GM12878 (cell line): ENCODE measurements at regions of chr9 and their contacts with region 1.

Region 1: DNA sequence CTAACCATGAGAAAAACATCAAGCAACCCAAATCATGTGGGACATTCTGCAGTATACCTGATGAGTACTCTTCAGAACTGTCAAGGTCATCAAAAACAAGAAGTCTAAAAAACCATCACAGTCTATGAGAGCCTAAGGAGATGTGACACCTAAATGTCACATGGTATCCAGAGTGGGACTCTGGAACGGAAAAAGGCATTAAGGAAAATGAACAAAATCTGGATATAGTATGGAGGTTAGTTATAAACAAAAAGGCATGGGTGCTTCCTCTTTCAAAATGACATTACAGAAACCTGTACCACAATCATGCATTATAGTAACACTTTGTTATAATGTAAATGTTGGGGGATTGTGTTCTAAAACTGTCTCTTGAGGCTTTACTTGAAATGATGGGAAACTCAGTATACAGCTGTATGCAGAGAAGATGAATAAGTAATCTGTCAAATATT is 47.4 kb downstream of the PRKACG start:
- DNase-seq: peak; percentile 46
- ATAC-seq: peak; percentile 86
- H3K4me3 ChIP-seq: no peak overlapping the region
- H3K27ac ChIP-seq: no peak overlapping the region
- H3K4me1 ChIP-seq: peaks cover 16% of the 10 kb centered on the region
- H3K27me3 ChIP-seq: no peaks in the 10 kb centered on the region
- CTCF ChIP-seq: no peak
- EP300 ChIP-seq: peak; percentile 74 to 77; a peak in 3 of 4 replicates
- POLR2A ChIP-seq: no peak
- RAD21 ChIP-seq: no peak

Region 2: DNA sequence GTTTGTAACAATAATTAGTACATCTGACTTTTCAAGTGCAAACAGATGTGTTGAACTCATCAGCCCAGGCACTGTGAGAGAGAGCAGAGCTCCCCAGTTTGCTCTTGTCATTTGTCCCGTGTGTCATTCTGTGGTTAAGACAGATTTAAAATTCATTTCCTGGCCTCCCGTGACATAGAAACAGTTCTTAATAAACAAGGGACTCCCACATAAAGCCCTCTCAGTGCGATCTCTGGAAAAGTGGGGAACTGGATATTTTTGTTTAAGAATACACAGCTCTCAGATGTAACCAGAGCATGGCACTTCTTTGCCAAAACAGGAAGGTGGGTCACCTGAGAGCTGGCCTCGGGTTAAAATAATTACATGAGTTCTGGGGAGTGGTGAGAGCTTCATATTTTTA is 11.2 kb before region 1 on chr9:
- CTCF ChIA-PET with region 1: interaction called, 56 read pairs
- POLR2A ChIA-PET with region 1: interaction called, 6 read pairs
- RAD21 ChIA-PET with region 1: interaction called, 41 read pairs
- SMC1A ChIA-PET with region 1: interaction called, 64 read pairs
- in situ Hi-C with region 1: no loop called
- intact Hi-C with region 1: loop called (anchors 2 kb)
- DNase-seq: no peak
- ATAC-seq: no peak
- H3K4me3 ChIP-seq: no peak overlapping the region
- H3K27ac ChIP-seq: no peak overlapping the region
- H3K4me1 ChIP-seq: peaks cover 35% of the 10 kb centered on the region
- H3K27me3 ChIP-seq: no peaks in the 10 kb centered on the region
- CTCF ChIP-seq: no peak
- EP300 ChIP-seq: no peak
- POLR2A ChIP-seq: no peak
- RAD21 ChIP-seq: no peak

Region 3: DNA sequence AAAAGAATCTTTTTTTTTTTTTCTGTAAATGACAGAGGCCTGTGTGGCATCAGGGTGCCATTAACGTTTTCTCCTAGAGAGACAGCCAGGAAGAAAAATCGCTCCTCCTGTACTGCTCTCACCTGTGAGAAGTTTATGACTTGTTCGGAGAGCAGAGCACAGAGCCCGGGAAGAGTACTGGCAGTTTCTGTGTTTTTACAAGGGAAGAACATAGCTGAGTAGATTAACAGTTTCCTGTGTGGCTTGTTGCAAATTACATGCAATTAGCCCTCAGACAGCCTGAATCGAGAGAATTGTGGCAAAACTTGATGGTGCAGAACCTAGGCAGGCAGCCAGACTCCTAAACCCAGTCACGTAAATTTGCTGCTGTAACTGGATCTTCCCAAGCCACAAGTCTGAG is 15.3 kb after region 1 on chr9:
- CTCF ChIA-PET with region 1: interaction called, 9 read pairs
- POLR2A ChIA-PET with region 1: interaction called, 5 read pairs
- RAD21 ChIA-PET with region 1: interaction called, 29 read pairs
- SMC1A ChIA-PET with region 1: interaction called, 160 read pairs
- in situ Hi-C with region 1: no loop called
- intact Hi-C with region 1: no loop called
- DNase-seq: peak; percentile 83
- ATAC-seq: peak; percentile 74
- H3K4me3 ChIP-seq: peak overlapping the region; percentile 33; the same call in 1 of the 2 replicates
- H3K27ac ChIP-seq: peak overlapping the region; percentile 70
- H3K4me1 ChIP-seq: peaks cover 61% of the 10 kb centered on the region
- H3K27me3 ChIP-seq: no peaks in the 10 kb centered on the region
- CTCF ChIP-seq: no peak
- EP300 ChIP-seq: peak; percentile 50 to 70; a peak in 2 of 4 replicates
- POLR2A ChIP-seq: no peak
- RAD21 ChIP-seq: no peak